ENCODE measurements at regions of chr19 and their contacts with region 1.

Region 1: GRCh38 chr19:7861955-7862951 is 11.9 kb downstream of the PRR36 start:
- DNase-seq: peak in 24 of 42 donors; percentile 39 to 76 (median 58)

Region 2: DNA sequence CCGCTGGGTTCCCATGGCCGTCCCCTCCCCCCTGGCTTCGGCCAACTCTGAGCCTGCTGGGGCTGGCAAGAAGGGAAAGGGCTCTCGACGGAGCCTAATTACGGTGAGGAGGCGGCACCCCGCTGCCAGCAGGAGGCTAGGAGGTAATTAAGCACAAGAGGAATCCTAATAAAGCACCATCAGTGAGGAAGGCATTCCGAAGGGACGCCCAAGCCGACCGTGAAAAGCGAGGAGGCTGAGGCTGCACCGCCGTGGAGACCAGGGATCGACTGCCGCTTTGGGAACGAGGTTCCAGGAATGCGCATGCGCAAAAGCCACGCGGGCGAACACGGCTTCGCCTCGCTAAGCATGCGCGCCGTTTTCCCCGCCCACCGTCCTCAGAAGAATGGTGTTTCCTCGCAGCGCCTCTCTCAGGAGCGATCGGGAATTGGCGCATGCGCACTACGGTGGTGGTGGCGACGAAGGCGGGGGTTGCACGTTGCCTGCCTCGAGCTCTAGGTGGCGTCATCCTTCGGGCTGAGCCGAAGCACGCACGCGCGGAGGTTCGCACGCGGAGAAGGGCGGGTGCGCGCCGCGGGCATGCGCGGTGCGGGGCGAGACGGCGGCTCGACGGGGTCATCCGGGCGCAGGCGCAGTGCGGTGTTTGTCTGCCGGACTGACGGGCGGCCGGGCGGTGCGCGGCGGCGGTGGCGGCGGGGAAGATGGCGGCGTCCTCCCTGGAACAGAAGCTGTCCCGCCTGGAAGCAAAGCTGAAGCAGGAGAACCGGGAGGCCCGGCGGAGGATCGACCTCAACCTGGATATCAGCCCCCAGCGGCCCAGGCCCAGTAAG is 41.2 kb after region 1 on chr19 and contains the start of gene MAP2K7:
- intact Hi-C with region 1: loop called (anchors 5 kb)
- DNase-seq: peak; percentile 95 to 100 (median 99)

Measured in head of caudate nucleus (tissue), 42 donors.